Right ventricle myocardium superior (tissue), 1 donor: ENCODE measurements at regions of chr6 and their contacts with region 1.

Region 1: DNA sequence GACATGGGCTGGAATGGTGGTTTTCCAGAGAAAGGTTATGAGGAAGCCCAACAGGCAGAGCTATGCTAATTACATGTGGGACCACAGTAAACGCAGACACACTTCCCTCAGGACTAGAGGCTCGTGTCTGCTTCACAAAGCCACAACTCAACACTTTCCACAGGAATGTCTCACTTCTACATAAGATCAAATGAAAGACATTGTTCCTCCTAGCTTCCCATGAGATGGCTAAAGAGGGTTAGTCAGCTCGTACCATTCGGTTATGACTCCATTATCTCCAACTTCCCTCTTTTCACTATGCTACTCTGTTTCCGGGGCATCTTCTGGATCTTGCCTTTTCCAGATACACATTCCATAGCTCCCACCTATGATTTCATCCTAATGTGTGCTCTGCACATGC is 29.1 kb upstream of the ZC3H12D start:
- DNase-seq: no peak
- ATAC-seq: no peak

Region 2: DNA sequence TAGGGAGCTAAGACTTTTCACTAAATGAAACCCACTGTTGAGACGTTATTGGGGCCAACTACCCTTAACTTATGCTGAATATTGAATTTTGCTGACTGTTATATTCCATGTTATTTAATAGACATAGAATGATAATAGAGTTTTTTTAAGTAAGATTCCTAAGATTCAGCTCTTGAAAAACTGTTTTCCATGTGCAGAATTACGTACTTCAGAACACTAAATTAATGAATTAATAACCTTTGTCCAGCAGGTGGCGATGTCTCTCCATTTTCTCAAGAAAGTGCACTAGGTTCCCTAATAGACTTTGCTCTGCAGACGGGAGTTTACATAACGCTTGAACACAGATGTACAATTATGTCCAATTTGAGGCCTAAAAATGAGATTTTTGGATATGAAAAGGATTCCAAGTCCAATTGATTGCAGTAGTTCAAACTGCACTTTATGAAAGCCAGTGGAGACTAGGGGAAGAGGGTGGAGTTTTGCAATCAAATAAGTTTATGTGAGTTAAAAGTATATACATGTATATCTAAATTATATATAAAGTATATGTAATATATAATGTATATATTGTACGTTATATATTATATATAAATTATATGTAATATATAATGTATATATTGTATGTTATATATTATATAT is 485.0 kb before region 1 on chr6:
- intact Hi-C with region 1: loop called (anchors 10 kb)
- DNase-seq: no peak
- ATAC-seq: peak; percentile 85

Region 3: DNA sequence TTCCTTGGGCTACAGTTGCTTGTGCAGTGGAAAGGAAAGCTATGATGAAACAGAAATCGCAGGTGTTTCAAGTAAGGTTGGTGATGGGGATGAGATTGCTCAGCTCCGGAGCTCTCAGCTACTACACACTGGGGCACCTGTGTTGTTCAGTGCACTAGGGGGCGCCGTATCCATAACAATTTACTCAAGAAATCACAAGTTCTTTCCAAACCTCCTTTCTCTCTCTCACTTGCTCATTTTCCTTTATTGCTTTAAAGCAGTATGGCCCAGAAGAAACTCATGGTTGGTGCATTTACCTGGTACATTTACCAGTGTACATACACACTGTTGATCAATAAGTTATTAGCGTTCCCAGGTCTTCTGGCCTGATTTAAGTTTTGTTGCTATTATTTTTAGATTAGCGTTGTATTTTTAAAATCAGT is 431.6 kb before region 1 on chr6:
- intact Hi-C with region 1: loop called (anchors 10 kb)
- DNase-seq: peak; percentile 85
- ATAC-seq: peak; percentile 73

Region 4: GRCh38 chr6:149454386-149454848 is 59.5 kb before region 1 on chr6:
- intact Hi-C with region 1: loop called (anchors 10 kb)
- DNase-seq: peak; percentile 99
- ATAC-seq: peak; percentile 91